ENCODE measurements at regions of chr6 and their contacts with region 1.

Region 1: GRCh38 chr6:73520688-73521350 is at the start of gene EEF1A1:
- DNase-seq: peak; percentile 91
- ATAC-seq: peak; percentile 79
- H3K4me3 Mint-ChIP-seq: peak within 1 kb of the TSS; percentile 96
- H3K27ac Mint-ChIP-seq: peak within 1 kb of the TSS; percentile 98
- H3K4me1 Mint-ChIP-seq: peaks cover 65% of the 10 kb centered on the region
- H3K27me3 Mint-ChIP-seq: no peaks in the 10 kb centered on the region
- CTCF ChIP-seq: no peak
- total RNA-seq, gene EEF1A1: 19,962 and 22,096 TPM in 2 replicates

Region 2: DNA sequence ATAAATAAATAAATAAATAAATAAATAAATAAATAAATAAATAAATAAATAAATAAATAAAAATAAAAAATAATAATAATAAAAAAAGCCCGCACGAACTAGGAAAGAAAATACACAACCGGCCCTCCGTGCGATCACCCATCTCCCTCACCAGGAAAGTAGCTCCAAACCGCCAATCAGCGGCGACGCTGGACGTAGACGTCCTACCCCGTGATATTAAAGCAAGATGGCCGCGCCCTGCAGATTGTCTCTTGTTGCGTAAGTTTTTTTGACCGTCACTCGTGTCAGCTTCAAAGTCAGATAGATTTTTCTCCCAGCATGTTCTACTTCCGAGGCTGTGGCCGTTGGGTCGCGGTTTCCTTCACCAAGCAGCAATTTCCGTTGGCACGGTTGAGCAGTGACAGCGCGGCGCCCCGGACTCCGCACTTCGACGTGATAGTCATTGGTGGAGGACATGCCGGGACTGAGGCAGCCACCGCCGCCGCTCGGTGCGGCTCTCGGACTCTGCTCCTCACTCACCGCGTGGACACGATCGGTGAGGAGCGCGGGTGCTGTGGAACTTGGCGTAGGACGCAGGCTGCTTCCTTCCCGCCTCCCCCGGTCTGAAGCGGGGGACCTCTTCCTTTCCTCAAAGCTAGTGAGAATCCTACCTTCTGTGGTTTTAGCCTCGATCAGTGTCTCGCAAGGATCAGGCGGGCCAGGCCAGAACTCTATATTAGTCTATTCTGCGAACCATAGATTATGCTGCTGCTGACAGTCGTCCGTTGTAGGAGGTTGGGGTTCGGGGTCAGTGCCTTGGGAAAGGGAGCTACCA is 59.1 kb before region 1 on chr6 and contains the start of gene MTO1:
- CTCF ChIA-PET with region 1: no interaction called
- POLR2A ChIA-PET with region 1: interaction called, 66 read pairs
- intact Hi-C with region 1: loop called (anchors 1 kb)
- DNase-seq: peak; percentile 61
- ATAC-seq: peak; percentile 94
- H3K4me3 Mint-ChIP-seq: peak within 1 kb of the TSS; percentile 97
- H3K27ac Mint-ChIP-seq: peak within 1 kb of the TSS; percentile 97
- H3K4me1 Mint-ChIP-seq: peaks cover 37% of the 10 kb centered on the region
- H3K27me3 Mint-ChIP-seq: no peaks in the 10 kb centered on the region
- CTCF ChIP-seq: no peak
- total RNA-seq, gene MTO1: 58.5 and 59.3 TPM in 2 replicates

Region 3: GRCh38 chr6:73537677-73538076 is 16.9 kb after region 1 on chr6:
- CTCF ChIA-PET with region 1: no interaction called
- POLR2A ChIA-PET with region 1: interaction called, 34 read pairs
- intact Hi-C with region 1: no loop called
- DNase-seq: no peak
- ATAC-seq: peak; percentile 77
- H3K4me3 Mint-ChIP-seq: no peak overlapping the region
- H3K27ac Mint-ChIP-seq: peak overlapping the region; percentile 80
- H3K4me1 Mint-ChIP-seq: peaks cover 10% of the 10 kb centered on the region
- H3K27me3 Mint-ChIP-seq: no peaks in the 10 kb centered on the region
- CTCF ChIP-seq: no peak

Region 4: GRCh38 chr6:73585566-73586415 is 65.0 kb after region 1 on chr6:
- CTCF ChIA-PET with region 1: interaction called, 14 read pairs
- POLR2A ChIA-PET with region 1: interaction called, 301 read pairs
- intact Hi-C with region 1: loop called (anchors 1 kb)
- DNase-seq: no peak
- ATAC-seq: peak; percentile 76
- H3K4me3 Mint-ChIP-seq: peak overlapping the region; percentile 79
- H3K27ac Mint-ChIP-seq: peak overlapping the region; percentile 99
- H3K4me1 Mint-ChIP-seq: peaks cover 38% of the 10 kb centered on the region
- H3K27me3 Mint-ChIP-seq: no peaks in the 10 kb centered on the region
- CTCF ChIP-seq: no peak

Region 5: DNA sequence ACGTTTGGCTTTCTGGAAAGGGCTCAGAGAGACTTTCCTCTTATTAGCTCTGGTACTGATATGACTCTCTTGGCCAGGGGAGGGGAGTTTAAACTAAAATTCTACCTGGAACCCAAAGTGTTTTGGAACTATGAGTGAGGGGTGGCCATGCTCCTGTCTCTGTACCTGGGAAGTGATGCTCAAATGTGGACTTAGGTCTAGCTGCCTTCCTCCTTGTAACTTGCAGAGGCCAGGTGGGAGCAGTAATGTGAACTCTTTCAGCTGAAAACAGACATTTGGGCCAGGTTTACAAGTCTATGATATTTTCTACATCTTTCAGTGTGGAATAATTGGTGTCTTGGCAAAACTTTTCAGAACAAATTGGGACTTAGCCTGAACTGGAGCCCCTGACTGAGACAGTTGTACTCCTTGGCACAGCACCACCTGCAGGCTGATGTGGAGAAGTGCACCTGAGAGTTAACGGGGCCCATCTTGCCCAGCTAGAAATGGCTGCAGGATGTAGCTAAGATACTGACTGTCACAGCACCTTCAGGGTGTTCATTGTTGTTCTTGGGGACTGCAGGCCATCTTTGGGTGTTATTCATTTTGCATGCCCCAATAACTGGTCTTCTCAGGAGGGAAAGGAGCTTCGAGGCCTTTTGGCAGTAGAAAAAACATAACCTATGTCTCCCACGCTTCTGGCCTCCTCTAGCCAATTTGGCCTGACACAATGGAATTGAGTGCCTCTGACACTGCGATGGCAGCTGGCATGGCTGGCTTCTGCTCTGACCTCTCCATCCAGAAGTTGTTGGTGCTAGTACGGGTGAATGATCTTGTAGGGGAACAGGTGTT is 212.2 kb after region 1 on chr6:
- CTCF ChIA-PET with region 1: no interaction called
- POLR2A ChIA-PET with region 1: no interaction called
- intact Hi-C with region 1: loop called (anchors 10 kb)
- DNase-seq: peak; percentile 27
- ATAC-seq: peak; percentile 95
- H3K4me3 Mint-ChIP-seq: no peak overlapping the region
- H3K27ac Mint-ChIP-seq: no peak overlapping the region
- H3K4me1 Mint-ChIP-seq: peaks cover 3% of the 10 kb centered on the region
- H3K27me3 Mint-ChIP-seq: peaks cover 3% of the 10 kb centered on the region
- CTCF ChIP-seq: peak; percentile 60